ENCODE measurements at regions of chr1 and their contacts with region 1.

Region 1: GRCh38 chr1:57404884-57405283 is 19.0 kb downstream of the DAB1 start:
- DNase-seq: no peak
- H3K4me3 ChIP-seq: no peak overlapping the region
- H3K4me3 Mint-ChIP-seq: no peak overlapping the region
- H3K27ac Mint-ChIP-seq: no peak overlapping the region
- H3K4me1 ChIP-seq: no peaks in the 10 kb centered on the region
- H3K4me1 Mint-ChIP-seq: no peaks in the 10 kb centered on the region
- H3K27me3 ChIP-seq: no peaks in the 10 kb centered on the region; the same call in 1 of the 2 replicates
- H3K27me3 Mint-ChIP-seq: no peaks in the 10 kb centered on the region
- CTCF ChIP-seq: no peak

Region 2: GRCh38 chr1:57393058-57393584 is 11.8 kb before region 1 on chr1:
- CTCF ChIA-PET with region 1: no interaction called
- POLR2A ChIA-PET with region 1: no interaction called
- intact Hi-C with region 1: no loop called
- DNase-seq: no peak
- H3K4me3 ChIP-seq: no peak overlapping the region
- H3K4me3 Mint-ChIP-seq: no peak overlapping the region
- H3K27ac Mint-ChIP-seq: no peak overlapping the region
- H3K4me1 ChIP-seq: no peaks in the 10 kb centered on the region
- H3K4me1 Mint-ChIP-seq: no peaks in the 10 kb centered on the region
- H3K27me3 ChIP-seq: no peaks in the 10 kb centered on the region
- H3K27me3 Mint-ChIP-seq: no peaks in the 10 kb centered on the region
- CTCF ChIP-seq: no peak

Region 3: GRCh38 chr1:57672346-57673140 is 267.7 kb after region 1 on chr1:
- CTCF ChIA-PET with region 1: no interaction called
- POLR2A ChIA-PET with region 1: no interaction called
- intact Hi-C with region 1: loop called (anchors 5 kb)
- DNase-seq: no peak
- H3K4me3 ChIP-seq: no peak overlapping the region
- H3K4me3 Mint-ChIP-seq: no peak overlapping the region
- H3K27ac Mint-ChIP-seq: no peak overlapping the region
- H3K4me1 ChIP-seq: no peaks in the 10 kb centered on the region
- H3K4me1 Mint-ChIP-seq: no peaks in the 10 kb centered on the region
- H3K27me3 ChIP-seq: no peaks in the 10 kb centered on the region
- H3K27me3 Mint-ChIP-seq: peaks cover 4% of the 10 kb centered on the region
- CTCF ChIP-seq: no peak

Measured in Caco-2 (cell line).